OCI-LY7 (cell line): ENCODE measurements at regions of chr5 and their contacts with region 1.

Region 1: DNA sequence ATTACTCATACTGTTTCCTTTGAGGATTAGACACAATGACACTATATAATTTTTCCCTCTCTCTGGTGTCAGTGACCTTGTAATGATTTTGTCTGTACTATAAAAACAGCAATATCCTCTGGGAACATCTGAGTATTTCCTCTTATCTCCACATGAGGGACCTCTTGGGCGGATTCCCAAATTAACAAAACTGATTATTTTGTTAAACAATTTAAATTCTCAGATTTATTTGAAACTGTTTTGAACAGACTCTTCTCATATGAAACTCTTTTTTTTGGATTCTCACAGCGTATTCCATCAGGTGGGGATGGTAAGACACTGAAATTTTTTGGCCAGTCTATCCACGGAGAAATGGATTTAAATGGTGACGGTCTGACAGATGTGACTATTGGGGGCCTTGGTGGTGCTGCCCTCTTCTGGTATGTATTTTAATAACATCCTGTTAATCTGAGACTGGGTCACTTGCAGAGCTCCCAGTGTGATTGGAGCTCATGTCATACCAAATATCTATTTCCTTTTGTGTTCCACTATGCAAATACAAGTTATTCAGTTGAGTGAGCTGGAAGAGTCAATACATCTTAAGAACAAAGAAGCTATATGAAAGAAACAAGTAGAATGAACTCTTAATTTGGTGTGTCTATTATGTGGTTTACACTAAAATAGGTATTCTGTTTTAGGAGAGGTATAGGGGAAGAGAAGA is 73.8 kb upstream of the ITGA2 start:
- DNase-seq: peak; percentile 41
- H3K4me3 ChIP-seq: no peak overlapping the region
- H3K27ac ChIP-seq: no peak overlapping the region
- H3K4me1 ChIP-seq: no peaks in the 10 kb centered on the region
- CTCF ChIP-seq: peak; percentile 89

Region 2: GRCh38 chr5:52693280-52693679 is 222.0 kb before region 1 on chr5:
- CTCF ChIA-PET with region 1: no interaction called
- POLR2A ChIA-PET with region 1: no interaction called
- intact Hi-C with region 1: loop called (anchors 10 kb)
- DNase-seq: peak; percentile 0
- H3K4me3 ChIP-seq: no peak overlapping the region
- H3K27ac ChIP-seq: no peak overlapping the region
- H3K4me1 ChIP-seq: no peaks in the 10 kb centered on the region
- CTCF ChIP-seq: peak; percentile 34; the same call in 1 of the 2 replicates

Region 3: DNA sequence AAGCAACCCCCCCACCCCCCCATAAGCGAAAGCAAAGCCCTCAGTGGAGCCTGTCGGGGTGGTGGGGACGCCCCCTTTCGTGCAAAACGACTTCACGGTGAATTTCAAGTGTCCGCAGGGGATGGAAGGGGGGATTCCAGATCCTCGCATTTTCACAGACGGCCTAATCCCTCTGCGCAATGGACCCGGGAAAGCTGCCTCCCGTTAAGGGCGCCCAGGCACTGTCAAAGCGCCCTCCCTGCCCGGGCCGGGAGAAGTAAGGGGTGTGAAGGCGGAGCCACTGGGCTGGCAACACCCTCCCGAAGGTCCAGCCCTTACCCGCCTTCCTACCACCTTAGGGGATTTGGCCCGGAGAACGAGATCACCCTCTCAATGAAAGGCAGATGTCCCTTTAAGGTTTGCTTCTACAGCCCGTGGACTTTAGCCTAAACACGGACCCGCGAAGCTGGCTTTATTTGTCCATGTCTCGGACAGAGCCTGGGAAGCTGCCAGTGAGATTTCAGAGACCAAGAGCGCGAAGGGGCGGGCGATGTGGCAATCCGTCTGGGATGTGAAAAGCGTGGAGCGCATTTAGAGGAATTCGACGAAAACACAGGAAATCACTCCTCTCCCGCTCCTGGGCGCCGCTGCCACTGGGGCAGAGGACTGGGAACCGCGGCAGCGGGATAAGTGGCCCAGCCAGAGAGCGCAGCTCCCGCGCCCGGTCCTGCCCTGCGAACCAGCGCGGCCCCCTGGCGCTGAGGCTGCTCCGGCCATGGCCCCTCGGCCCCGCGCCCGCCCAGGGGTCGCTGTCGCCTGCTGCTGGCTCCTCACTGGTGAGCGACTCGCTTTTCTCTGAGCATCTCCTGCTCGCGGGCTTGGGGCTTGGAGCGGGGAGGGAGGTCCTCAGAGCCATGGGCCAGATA is 127.5 kb before region 1 on chr5 and contains the starts of genes ITGA1 and PELO:
- CTCF ChIA-PET with region 1: no interaction called
- POLR2A ChIA-PET with region 1: no interaction called
- intact Hi-C with region 1: loop called (anchors 1 kb)
- DNase-seq: no peak
- H3K4me3 ChIP-seq: no peak within 1 kb of the TSS
- H3K27ac ChIP-seq: no peak within 1 kb of the TSS
- H3K4me1 ChIP-seq: no peaks in the 10 kb centered on the region
- CTCF ChIP-seq: no peak
- total RNA-seq, gene ITGA1: not detected in 2 replicates
- total RNA-seq, gene PELO: 11.1 and 13.0 TPM in 2 replicates

Region 4: DNA sequence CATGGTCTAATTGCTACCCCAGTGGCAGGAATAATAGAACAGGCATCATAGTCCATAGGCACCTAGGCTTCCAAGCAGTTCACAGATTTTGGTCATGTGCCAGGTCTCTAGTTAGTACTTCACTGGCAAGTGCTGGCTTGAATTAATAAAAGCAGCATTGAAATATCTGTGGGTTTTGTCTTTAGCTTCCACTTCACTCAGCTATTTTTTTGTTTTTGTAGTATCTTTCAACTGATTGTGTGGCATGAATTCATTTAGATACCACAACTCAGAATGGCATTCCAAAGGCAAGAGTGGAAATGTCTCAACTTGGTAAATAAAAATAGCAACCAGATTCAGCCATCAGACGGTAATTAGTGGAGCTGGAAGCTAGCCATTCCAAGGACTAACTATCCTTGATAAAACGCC is 46.0 kb after region 1 on chr5:
- CTCF ChIA-PET with region 1: no interaction called
- POLR2A ChIA-PET with region 1: no interaction called
- intact Hi-C with region 1: no loop called
- DNase-seq: no peak
- H3K4me3 ChIP-seq: no peak overlapping the region
- H3K27ac ChIP-seq: no peak overlapping the region
- H3K4me1 ChIP-seq: no peaks in the 10 kb centered on the region
- CTCF ChIP-seq: no peak

Region 5: DNA sequence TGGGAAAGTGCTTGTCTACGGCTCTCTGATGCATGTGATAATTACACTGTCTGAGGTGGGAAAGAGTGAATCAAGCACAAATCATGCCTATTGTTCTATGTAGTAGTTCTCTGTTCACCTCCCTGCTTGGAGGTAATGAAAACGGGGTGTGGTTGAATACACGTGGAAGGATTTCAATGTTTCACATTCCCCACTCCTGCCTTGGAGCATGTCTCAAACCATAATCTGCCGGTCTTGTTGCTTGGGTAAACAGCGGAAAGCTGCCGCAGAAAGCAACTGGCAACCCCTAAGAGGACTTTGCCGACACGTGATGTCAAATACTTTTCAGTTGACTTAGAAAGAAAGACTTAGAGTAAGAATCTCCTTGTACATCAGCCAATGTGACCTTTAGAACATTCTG is 257.8 kb after region 1 on chr5:
- CTCF ChIA-PET with region 1: no interaction called
- POLR2A ChIA-PET with region 1: no interaction called
- intact Hi-C with region 1: no loop called
- DNase-seq: no peak
- H3K4me3 ChIP-seq: no peak overlapping the region
- H3K27ac ChIP-seq: no peak overlapping the region
- H3K4me1 ChIP-seq: no peaks in the 10 kb centered on the region
- CTCF ChIP-seq: no peak